Naive thymus-derived CD4-positive, alpha-beta T cell (primary cell): ENCODE measurements at regions of chr5 and their contacts with region 1.

Region 1: DNA sequence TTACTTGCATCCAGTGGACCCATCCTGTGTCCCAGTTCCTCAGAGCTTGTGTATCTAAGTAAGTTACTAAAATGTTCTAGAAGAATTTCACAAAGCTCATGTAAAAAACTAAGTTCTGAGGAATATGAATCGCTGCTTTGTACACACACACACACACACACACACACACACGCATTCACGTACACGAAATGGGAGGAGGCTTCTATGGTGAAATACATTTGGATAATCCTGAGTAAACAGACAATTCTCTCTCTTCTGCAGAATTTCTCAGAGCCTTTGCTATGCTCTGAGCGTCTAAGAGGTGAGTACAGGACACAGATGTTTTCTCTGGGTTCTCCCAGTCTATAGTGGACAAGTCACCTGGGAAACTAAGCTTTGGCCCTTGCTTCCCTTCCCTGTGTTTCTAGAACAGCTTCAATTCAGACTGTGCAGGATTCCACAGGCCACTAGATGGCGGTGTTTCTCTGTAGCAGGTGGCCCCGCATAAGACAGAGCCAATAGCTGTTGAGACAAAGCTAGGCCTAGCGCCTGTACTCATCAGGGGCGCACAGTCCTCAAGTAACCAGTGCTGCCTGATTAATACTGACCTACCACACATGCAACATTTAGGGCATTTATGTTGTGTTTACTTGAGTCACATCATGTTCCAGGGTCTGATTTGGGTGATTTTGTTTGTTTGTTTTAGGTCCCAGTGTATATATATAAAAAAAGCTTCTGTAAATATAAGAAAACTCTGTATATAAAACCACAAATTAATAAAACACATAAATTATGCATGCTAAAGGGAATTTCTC is 114.8 kb downstream of the LIFR start:
- DNase-seq: peak; percentile 50 to 79 (median 72)
- ATAC-seq: peak; percentile 98
- H3K4me3 ChIP-seq: no peak overlapping the region
- H3K4me3 Mint-ChIP-seq: no peak overlapping the region
- H3K27ac ChIP-seq: no peak overlapping the region
- H3K27ac Mint-ChIP-seq: no peak overlapping the region
- H3K4me1 ChIP-seq: no peaks in the 10 kb centered on the region
- H3K4me1 Mint-ChIP-seq: no peaks in the 10 kb centered on the region
- H3K27me3 ChIP-seq: no peaks in the 10 kb centered on the region
- H3K27me3 Mint-ChIP-seq: peaks cover 37 to 43% (median 41%) of the 10 kb centered on the region in 5 donors

Region 2: GRCh38 chr5:38420691-38421390 is 20.8 kb before region 1 on chr5:
- CTCF ChIA-PET with region 1: interaction called, 11 read pairs
- POLR2A ChIA-PET with region 1: no interaction called
- intact Hi-C with region 1: no loop called
- DNase-seq: peak in 3 of 9 donors; percentile 4 to 18 (median 11)
- ATAC-seq: peak; percentile 42
- H3K4me3 ChIP-seq: no peak overlapping the region
- H3K4me3 Mint-ChIP-seq: no peak overlapping the region
- H3K27ac ChIP-seq: no peak overlapping the region
- H3K27ac Mint-ChIP-seq: no peak overlapping the region
- H3K4me1 ChIP-seq: no peaks in the 10 kb centered on the region
- H3K4me1 Mint-ChIP-seq: peaks cover 0 to 1% (median 0%) of the 10 kb centered on the region in 7 donors
- H3K27me3 ChIP-seq: no peaks in the 10 kb centered on the region
- H3K27me3 Mint-ChIP-seq: peaks cover 24 to 42% (median 36%) of the 10 kb centered on the region in 5 donors

Region 3: GRCh38 chr5:38551030-38552017 is 109.7 kb after region 1 on chr5:
- CTCF ChIA-PET with region 1: interaction called, 9 read pairs
- POLR2A ChIA-PET with region 1: no interaction called
- intact Hi-C with region 1: loop called in 1 of 2 experiments (anchors 1 kb)
- DNase-seq: no peak
- ATAC-seq: no peak
- H3K4me3 ChIP-seq: no peak overlapping the region
- H3K4me3 Mint-ChIP-seq: no peak overlapping the region
- H3K27ac ChIP-seq: no peak overlapping the region
- H3K27ac Mint-ChIP-seq: no peak overlapping the region
- H3K4me1 ChIP-seq: peaks cover 0 to 5% of the 10 kb centered on the region in 2 donors
- H3K4me1 Mint-ChIP-seq: peaks cover 0 to 13% (median 6%) of the 10 kb centered on the region in 7 donors
- H3K27me3 ChIP-seq: peaks cover 0 to 7% of the 10 kb centered on the region in 2 donors
- H3K27me3 Mint-ChIP-seq: peaks cover 44 to 52% (median 48%) of the 10 kb centered on the region in 5 donors

Region 4: DNA sequence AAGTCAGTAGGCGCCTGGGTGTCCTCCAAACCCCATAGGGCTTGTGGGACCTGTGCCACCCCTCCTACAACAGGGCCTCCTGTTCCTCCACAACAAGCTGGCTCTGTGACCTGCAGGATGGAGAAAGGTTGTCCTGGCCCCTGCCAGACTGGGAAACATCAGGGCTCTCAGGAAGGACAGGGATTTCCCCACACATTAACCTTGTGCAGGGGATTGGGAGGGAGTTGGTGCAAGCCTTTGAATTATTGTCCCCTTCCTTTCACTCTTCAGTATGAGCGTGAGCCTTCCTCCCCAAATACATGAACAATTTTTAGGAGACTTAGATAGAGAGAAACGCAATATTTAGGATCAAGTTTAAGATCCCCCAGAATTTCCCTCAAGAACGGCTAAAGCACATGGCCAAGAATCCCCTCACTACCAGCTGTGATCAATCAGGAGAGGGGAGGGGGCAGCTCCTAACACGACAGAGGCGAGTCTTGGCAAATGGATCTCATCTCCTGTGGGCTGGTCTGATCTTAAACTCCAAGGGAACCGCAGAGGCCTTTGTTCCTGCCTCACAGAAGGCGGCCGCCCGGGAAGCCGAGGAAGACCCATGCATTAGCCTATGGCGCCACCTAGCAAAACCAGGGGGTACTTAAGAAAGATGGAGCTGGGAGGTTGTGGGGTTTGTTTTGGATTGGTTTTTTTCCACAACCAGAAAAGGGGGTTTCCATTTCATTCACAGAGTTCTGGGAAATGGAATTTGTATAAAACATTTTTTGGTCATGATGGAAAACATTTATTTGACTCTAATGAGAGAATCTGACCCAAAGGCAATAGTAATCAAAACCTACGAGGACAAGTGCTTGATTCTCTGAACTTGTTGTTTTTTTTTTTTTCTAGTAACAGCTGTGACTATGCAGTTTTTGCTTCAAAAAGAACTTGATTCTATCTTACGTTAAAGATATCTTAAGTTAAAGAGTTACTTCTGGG is 368.0 kb after region 1 on chr5:
- CTCF ChIA-PET with region 1: interaction called, 17 read pairs
- POLR2A ChIA-PET with region 1: no interaction called
- intact Hi-C with region 1: loop called (anchors 1 kb)
- DNase-seq: peak in 7 of 9 donors; percentile 8 to 52 (median 22)
- ATAC-seq: no peak
- H3K4me3 ChIP-seq: no peak overlapping the region
- H3K4me3 Mint-ChIP-seq: peak overlapping the region in 1 of 10 donors; percentile 7
- H3K27ac ChIP-seq: no peak overlapping the region
- H3K27ac Mint-ChIP-seq: no peak overlapping the region
- H3K4me1 ChIP-seq: no peaks in the 10 kb centered on the region
- H3K4me1 Mint-ChIP-seq: peaks cover 0 to 9% (median 0%) of the 10 kb centered on the region in 7 donors
- H3K27me3 ChIP-seq: no peaks in the 10 kb centered on the region
- H3K27me3 Mint-ChIP-seq: peaks cover 21 to 62% (median 49%) of the 10 kb centered on the region in 5 donors

Region 5: GRCh38 chr5:38922199-38922598 is 480.5 kb after region 1 on chr5:
- CTCF ChIA-PET with region 1: interaction called, 20 read pairs
- POLR2A ChIA-PET with region 1: no interaction called
- intact Hi-C with region 1: loop called (anchors 1 kb)
- DNase-seq: peak in 8 of 9 donors; percentile 10 to 35 (median 23)
- ATAC-seq: peak; percentile 73
- H3K4me3 ChIP-seq: no peak overlapping the region
- H3K4me3 Mint-ChIP-seq: no peak overlapping the region
- H3K27ac ChIP-seq: no peak overlapping the region
- H3K27ac Mint-ChIP-seq: no peak overlapping the region
- H3K4me1 ChIP-seq: no peaks in the 10 kb centered on the region
- H3K4me1 Mint-ChIP-seq: peaks cover 0 to 3% (median 0%) of the 10 kb centered on the region in 7 donors
- H3K27me3 ChIP-seq: no peaks in the 10 kb centered on the region
- H3K27me3 Mint-ChIP-seq: peaks cover 25 to 40% (median 37%) of the 10 kb centered on the region in 5 donors

Region 6: GRCh38 chr5:39138892-39139291 is 697.2 kb after region 1 on chr5:
- CTCF ChIA-PET with region 1: no interaction called
- POLR2A ChIA-PET with region 1: no interaction called
- intact Hi-C with region 1: loop called in 1 of 2 experiments (anchors 10 kb)
- DNase-seq: no peak
- ATAC-seq: no peak
- H3K4me3 ChIP-seq: no peak overlapping the region
- H3K4me3 Mint-ChIP-seq: no peak overlapping the region
- H3K27ac ChIP-seq: no peak overlapping the region
- H3K27ac Mint-ChIP-seq: peak overlapping the region in 3 of 9 donors; percentile 14 to 77 (median 23)
- H3K4me1 ChIP-seq: peaks cover 6 to 10% of the 10 kb centered on the region in 2 donors
- H3K4me1 Mint-ChIP-seq: peaks cover 12 to 51% (median 31%) of the 10 kb centered on the region in 7 donors
- H3K27me3 ChIP-seq: no peaks in the 10 kb centered on the region
- H3K27me3 Mint-ChIP-seq: no peaks in the 10 kb centered on the region

Region 7: GRCh38 chr5:39547553-39548154 is 1106.0 kb after region 1 on chr5:
- CTCF ChIA-PET with region 1: interaction called, 21 read pairs
- POLR2A ChIA-PET with region 1: no interaction called
- intact Hi-C with region 1: loop called (anchors 1 to 5 kb)
- DNase-seq: peak in 7 of 9 donors; percentile 14 to 49 (median 36)
- ATAC-seq: peak; percentile 50
- H3K4me3 ChIP-seq: no peak overlapping the region
- H3K4me3 Mint-ChIP-seq: peak overlapping the region in 8 of 10 donors; percentile 16 to 67 (median 50)
- H3K27ac ChIP-seq: no peak overlapping the region
- H3K27ac Mint-ChIP-seq: peak overlapping the region in 1 of 9 donors; percentile 55
- H3K4me1 ChIP-seq: no peaks in the 10 kb centered on the region
- H3K4me1 Mint-ChIP-seq: peaks cover 0 to 8% (median 5%) of the 10 kb centered on the region in 7 donors
- H3K27me3 ChIP-seq: no peaks in the 10 kb centered on the region
- H3K27me3 Mint-ChIP-seq: peaks cover 0 to 5% (median 0%) of the 10 kb centered on the region in 5 donors